Lower leg skin (tissue), 4 donors: ENCODE measurements at regions of chr6 and their contacts with region 1.

Region 1: DNA sequence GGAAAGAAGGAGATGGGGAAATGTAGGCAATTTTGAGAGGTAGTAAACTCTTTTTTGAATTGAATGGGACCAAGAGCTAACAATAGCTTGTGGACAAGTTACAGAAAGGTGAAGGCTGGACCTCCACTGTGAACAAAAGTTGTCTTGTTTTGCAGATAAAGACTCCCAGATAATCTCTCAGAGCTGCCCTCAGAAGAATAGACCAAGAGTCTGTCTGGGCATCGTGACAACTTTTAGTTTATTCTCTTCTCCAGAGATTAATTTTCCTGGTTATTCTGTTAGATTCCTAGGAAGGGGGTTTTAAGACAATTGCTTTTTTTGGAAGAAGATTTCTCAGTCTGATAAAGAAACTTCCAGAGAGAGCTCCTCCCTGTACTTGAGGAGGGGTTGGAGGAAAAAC is 161.9 kb downstream of the COL19A1 start:
- DNase-seq: no peak
- H3K4me3 ChIP-seq: no peak overlapping the region
- CTCF ChIP-seq: no peak
- POLR2A ChIP-seq: no peak

Region 2: DNA sequence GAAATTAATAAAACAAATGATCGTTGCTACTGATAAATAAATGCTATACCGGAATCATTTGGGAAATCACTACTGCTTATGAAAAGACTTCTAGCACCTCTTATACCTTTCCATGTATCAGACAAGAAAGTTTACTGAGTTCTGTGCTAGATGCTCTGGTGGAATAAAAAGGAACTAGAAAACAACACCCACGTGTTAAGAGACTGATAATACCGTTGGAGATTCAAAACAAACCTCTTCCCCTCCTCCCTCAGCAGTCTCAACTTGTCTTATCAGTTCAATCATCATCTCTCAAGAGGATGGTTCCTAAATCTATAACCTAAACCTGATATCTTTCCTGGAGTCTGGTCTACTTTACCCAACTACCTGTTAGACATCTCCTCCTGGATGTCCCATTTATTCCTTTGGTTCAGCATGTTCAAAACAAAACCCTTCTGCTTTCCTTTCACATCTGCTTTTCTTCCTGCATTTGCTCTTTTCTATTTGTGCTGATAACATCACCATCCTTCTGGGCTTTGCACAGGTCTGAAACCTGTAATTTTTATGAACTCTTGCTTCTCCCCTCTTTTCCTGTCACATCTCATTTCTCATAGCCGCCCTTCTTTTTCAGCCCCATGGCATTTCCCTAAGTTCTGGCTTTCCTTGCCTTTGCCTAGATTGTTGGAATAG is 39.7 kb before region 1 on chr6:
- intact Hi-C with region 1: loop called (anchors 1 kb)
- DNase-seq: no peak
- H3K4me3 ChIP-seq: no peak overlapping the region
- CTCF ChIP-seq: no peak
- POLR2A ChIP-seq: no peak